ENCODE measurements at regions of chr5 and their contacts with region 1.

Region 1: DNA sequence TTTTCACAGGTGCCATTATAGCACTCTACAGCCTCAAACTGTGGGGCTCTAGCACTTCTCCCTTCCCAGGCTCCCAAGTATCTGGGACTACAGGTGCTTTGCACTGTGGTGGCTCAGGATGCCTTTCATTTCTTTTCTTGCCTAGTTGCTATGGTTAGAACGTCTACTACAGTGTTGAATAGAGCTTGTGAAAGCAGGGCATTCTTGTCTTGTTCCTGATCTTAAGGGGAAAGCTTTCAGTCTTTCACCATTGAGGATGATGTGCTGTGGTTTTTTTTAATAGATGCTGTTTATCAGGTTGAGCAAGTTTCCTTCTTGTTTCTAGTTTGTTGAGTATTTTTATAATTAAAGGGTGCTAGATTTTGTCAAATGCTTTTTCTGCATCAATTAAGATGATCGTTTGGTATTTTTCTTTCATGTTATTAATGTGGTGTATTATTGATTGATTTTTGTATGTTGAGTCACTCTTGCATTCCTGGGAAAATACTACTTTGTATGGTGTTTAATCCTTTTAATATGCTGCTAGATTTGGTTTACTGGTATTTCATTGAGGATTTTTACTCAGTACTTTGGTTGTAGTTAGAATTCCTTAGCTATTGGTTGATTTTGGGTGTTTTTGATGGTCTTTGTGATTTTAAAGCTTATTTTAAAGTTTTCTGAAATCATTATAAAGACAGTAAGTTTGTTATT is 35.6 kb downstream of the GPBP1 start:
- DNase-seq: peak; percentile 10 to 15 (median 11)
- H3K4me3 ChIP-seq: no peak overlapping the region
- H3K4me3 Mint-ChIP-seq: no peak overlapping the region
- H3K27ac ChIP-seq: peak overlapping the region in 1 of 2 donors; percentile 51
- H3K27ac Mint-ChIP-seq: peak overlapping the region in 5 of 7 donors; percentile 37 to 67 (median 63)
- H3K4me1 ChIP-seq: peaks cover 22 to 23% of the 10 kb centered on the region in 2 donors
- H3K4me1 Mint-ChIP-seq: peaks cover 43% of the 10 kb centered on the region
- H3K27me3 ChIP-seq: no peaks in the 10 kb centered on the region
- H3K27me3 Mint-ChIP-seq: peaks cover 0 to 1% (median 0%) of the 10 kb centered on the region in 3 donors
- CTCF ChIP-seq: no peak

Region 2: GRCh38 chr5:57173185-57174127 is 36.0 kb before region 1 on chr5 and contains the start of gene GPBP1:
- intact Hi-C with region 1: loop called in 1 of 2 experiments (anchors 5 kb)
- DNase-seq: peak; percentile 98 to 99 (median 99)
- H3K4me3 ChIP-seq: peak within 1 kb of the TSS; percentile 69 to 99 (median 93)
- H3K4me3 Mint-ChIP-seq: peak within 1 kb of the TSS; percentile 89 to 96
- H3K27ac ChIP-seq: peak within 1 kb of the TSS; percentile 98 to 100
- H3K27ac Mint-ChIP-seq: peak within 1 kb of the TSS; percentile 99 to 100 (median 99)
- H3K4me1 ChIP-seq: peaks cover 45 to 54% of the 10 kb centered on the region in 2 donors
- H3K4me1 Mint-ChIP-seq: peaks cover 38% of the 10 kb centered on the region
- H3K27me3 ChIP-seq: no peaks in the 10 kb centered on the region
- H3K27me3 Mint-ChIP-seq: peaks cover 0 to 2% (median 2%) of the 10 kb centered on the region in 3 donors
- CTCF ChIP-seq: no peak
- polyA plus RNA-seq, gene GPBP1: 23.2 to 43.7 (median 30.9) TPM

Region 3: GRCh38 chr5:57258052-57258451 is 48.6 kb after region 1 on chr5:
- intact Hi-C with region 1: no loop called
- DNase-seq: no peak
- H3K4me3 ChIP-seq: no peak overlapping the region
- H3K4me3 Mint-ChIP-seq: no peak overlapping the region
- H3K27ac ChIP-seq: no peak overlapping the region
- H3K27ac Mint-ChIP-seq: peak overlapping the region in 1 of 7 donors; percentile 18
- H3K4me1 ChIP-seq: no peaks in the 10 kb centered on the region
- H3K4me1 Mint-ChIP-seq: peaks cover 2% of the 10 kb centered on the region
- H3K27me3 ChIP-seq: no peaks in the 10 kb centered on the region
- H3K27me3 Mint-ChIP-seq: no peaks in the 10 kb centered on the region
- CTCF ChIP-seq: no peak